ENCODE measurements at regions of chr10 and their contacts with region 1.

Region 1: GRCh38 chr10:132571650-132572535 is 34.3 kb downstream of the INPP5A start:
- DNase-seq: peak; percentile 90
- H3K4me3 Mint-ChIP-seq: no peak overlapping the region
- H3K27ac Mint-ChIP-seq: no peak overlapping the region
- H3K4me1 Mint-ChIP-seq: peaks cover 5% of the 10 kb centered on the region
- H3K27me3 Mint-ChIP-seq: no peaks in the 10 kb centered on the region

Region 2: GRCh38 chr10:132551093-132551807 is 20.6 kb before region 1 on chr10:
- CTCF ChIA-PET with region 1: interaction called, 16 read pairs
- intact Hi-C with region 1: loop called (anchors 2 kb)
- DNase-seq: peak; percentile 76
- H3K4me3 Mint-ChIP-seq: peak overlapping the region; percentile 72
- H3K27ac Mint-ChIP-seq: peak overlapping the region; percentile 69
- H3K4me1 Mint-ChIP-seq: peaks cover 40% of the 10 kb centered on the region
- H3K27me3 Mint-ChIP-seq: no peaks in the 10 kb centered on the region

Region 3: GRCh38 chr10:132588301-132589013 is 16.6 kb after region 1 on chr10:
- CTCF ChIA-PET with region 1: no interaction called
- intact Hi-C with region 1: loop called (anchors 1 kb)
- DNase-seq: peak; percentile 79
- H3K4me3 Mint-ChIP-seq: peak overlapping the region; percentile 5
- H3K27ac Mint-ChIP-seq: peak overlapping the region; percentile 8
- H3K4me1 Mint-ChIP-seq: peaks cover 70% of the 10 kb centered on the region
- H3K27me3 Mint-ChIP-seq: no peaks in the 10 kb centered on the region

Measured in activated naive CD4-positive, alpha-beta T cell treated with anti-CD3 and anti-CD28 coated beads for 36 hours (primary cell).